H1 (cell line): ENCODE measurements at regions of chr16 and their contacts with region 1.

Region 1: DNA sequence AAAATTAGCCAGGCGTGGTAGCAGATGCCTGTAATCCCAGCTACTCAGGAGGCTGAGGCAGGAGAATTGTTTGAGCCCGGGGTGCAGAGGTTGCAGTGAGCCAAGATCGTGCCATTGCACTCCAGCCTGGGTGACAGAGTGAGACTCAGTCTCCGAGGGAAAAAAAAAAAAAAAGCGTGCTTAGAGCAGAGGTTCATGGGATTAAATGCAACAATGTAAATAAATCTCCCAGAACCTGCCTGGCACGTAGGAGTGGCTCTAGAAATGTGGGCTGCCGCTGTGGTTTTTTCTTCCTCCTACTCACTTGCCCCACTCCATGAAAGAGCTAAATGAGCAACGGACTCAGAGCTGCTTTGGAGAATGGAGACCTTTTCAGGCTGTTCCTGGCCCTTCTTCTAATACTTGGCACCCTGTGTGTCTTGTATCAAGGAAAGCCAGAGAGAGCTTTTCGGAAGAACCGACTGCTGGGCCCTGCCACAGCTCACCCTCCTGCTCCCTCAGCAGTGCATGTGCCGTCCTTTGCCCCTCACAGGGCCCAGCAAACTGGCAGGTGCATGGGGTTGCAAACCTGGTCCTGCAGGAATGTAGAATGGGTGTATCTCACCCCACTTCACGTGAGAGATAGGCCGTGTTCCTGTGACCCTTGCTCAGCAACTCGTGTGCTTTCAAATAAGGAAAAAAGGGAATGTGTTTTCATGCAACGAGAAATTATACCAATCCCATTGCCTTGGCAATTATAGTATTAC is 52.0 kb downstream of the LDHD start:
- DNase-seq: no peak
- H3K4me3 ChIP-seq: no peak overlapping the region
- H3K27ac ChIP-seq: no peak overlapping the region
- H3K4me1 ChIP-seq: peaks cover 4 to 16% (median 8%) of the 10 kb centered on the region in 4 experiments; a peak in 6 of 7 replicates
- H3K27me3 ChIP-seq: no peaks in the 10 kb centered on the region
- CTCF ChIP-seq: no peak
- EP300 ChIP-seq: no peak
- POLR2A ChIP-seq: no peak
- RAD21 ChIP-seq: no peak

Region 2: DNA sequence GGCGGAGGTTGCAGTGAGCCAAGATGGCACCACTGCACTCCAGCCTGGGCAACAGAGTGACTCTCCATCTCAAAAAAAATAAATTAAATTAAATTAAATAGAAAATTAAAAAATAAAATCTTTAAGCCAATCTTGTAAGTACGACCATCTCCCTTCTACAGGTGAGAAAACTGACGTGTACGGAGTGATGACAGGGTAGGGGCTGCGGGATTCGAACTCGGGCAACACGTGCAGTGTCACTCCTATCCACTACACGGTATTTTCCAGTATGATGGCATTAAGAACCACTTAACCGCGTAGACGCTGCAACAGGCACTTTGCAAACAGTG is 80.4 kb before region 1 on chr16:
- CTCF ChIA-PET with region 1: no interaction called
- POLR2A ChIA-PET with region 1: no interaction called
- DNase-seq: no peak
- H3K4me3 ChIP-seq: peak overlapping the region; percentile 76 to 91 (median 87)
- H3K27ac ChIP-seq: peak overlapping the region; percentile 86; the same call in 1 of the 2 replicates
- H3K4me1 ChIP-seq: no peaks in the 10 kb centered on the region
- H3K27me3 ChIP-seq: no peaks in the 10 kb centered on the region
- CTCF ChIP-seq: no peak
- EP300 ChIP-seq: no peak
- POLR2A ChIP-seq: no peak
- RAD21 ChIP-seq: no peak

Region 3: DNA sequence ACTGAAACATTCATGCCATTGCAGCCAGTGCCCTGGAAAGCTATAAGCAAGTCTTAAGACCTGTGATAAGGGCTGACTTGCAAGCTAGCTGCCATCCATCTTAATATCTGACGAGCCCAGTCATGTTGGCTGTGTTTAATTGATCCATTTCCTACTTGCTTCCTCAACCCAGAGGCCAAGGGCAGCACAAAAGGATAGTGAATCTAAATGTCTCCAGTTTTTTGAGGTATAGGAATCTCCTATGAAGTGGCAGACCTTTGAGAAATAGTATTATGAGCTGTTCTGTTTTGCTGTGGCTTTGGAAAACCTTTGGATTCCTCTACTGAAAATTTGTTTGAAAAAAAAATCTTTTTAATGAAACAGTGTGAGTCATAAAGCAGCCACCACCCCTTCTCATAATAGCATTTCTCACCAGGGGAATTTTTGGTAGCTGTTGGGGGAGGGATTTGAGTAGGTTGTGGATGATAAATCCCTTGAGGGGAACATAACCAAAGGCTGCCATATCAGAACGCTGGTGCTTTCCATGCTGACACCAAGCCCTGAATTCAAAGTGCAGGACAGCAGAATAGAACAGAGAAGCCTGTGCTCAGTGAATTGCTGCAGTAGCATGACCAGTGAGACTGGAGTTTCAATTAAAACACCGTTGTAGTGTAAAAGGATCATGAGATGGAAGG is 52.8 kb before region 1 on chr16:
- CTCF ChIA-PET with region 1: interaction called, 20 read pairs
- POLR2A ChIA-PET with region 1: interaction called, 3 read pairs
- DNase-seq: no peak
- H3K4me3 ChIP-seq: no peak overlapping the region
- H3K27ac ChIP-seq: no peak overlapping the region
- H3K4me1 ChIP-seq: peaks cover 0 to 14% (median 3%) of the 10 kb centered on the region in 4 experiments; a peak in 4 of 7 replicates
- H3K27me3 ChIP-seq: no peaks in the 10 kb centered on the region
- CTCF ChIP-seq: no peak
- EP300 ChIP-seq: no peak
- POLR2A ChIP-seq: no peak
- RAD21 ChIP-seq: no peak

Region 4: DNA sequence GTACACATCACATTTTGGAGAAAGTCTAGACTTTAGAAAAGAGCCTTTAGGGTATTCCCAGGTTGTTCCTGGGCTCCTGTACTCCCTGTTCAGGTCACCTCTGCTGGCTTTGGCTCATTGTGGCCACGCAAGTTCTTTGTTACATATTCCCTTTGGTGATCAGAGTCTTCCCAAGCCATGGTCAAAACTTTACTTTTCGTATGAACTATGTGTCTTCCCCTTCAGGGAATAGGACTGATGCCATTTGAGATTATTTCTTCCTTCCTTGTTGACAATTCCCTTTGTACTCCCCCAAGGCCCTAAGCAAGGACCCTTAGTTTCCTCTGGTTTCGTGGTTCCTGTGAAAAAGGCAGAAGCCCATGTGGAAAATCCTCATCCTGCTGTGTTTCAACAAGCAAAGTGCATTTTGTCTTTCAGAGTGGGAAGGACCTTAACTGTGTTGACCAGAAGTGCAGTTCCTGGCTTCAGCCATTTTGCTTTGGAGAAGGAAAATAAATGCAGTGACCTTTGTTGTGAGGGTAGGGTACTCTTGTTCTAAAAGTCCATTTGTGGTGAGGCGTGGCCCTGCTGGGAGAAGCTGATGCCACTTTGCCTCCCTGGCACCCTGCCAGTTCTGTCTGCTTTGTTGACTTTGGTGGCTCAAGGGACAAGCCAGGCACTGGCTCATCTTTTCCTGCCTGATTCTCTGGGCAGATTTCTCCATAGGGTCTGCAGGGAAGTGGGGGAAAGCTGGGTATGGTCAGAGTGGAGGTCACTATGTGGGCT is 10.6 kb before region 1 on chr16:
- CTCF ChIA-PET with region 1: interaction called, 12 read pairs
- POLR2A ChIA-PET with region 1: interaction called, 3 read pairs
- DNase-seq: no peak
- H3K4me3 ChIP-seq: no peak overlapping the region
- H3K27ac ChIP-seq: no peak overlapping the region
- H3K4me1 ChIP-seq: peaks cover 0 to 11% (median 3%) of the 10 kb centered on the region in 4 experiments; a peak in 4 of 7 replicates
- H3K27me3 ChIP-seq: no peaks in the 10 kb centered on the region
- CTCF ChIP-seq: no peak
- EP300 ChIP-seq: no peak
- POLR2A ChIP-seq: no peak
- RAD21 ChIP-seq: no peak

Region 5: GRCh38 chr16:75074920-75075687 is 10.5 kb after region 1 on chr16:
- CTCF ChIA-PET with region 1: interaction called, 20 read pairs
- POLR2A ChIA-PET with region 1: interaction called, 9 read pairs
- DNase-seq: no peak
- H3K4me3 ChIP-seq: no peak overlapping the region
- H3K27ac ChIP-seq: no peak overlapping the region
- H3K4me1 ChIP-seq: peaks cover 5 to 17% (median 14%) of the 10 kb centered on the region in 4 experiments
- H3K27me3 ChIP-seq: no peaks in the 10 kb centered on the region
- CTCF ChIP-seq: no peak
- EP300 ChIP-seq: no peak
- POLR2A ChIP-seq: no peak
- RAD21 ChIP-seq: no peak

Region 6: GRCh38 chr16:75087375-75087979 is 22.9 kb after region 1 on chr16:
- CTCF ChIA-PET with region 1: interaction called, 17 read pairs
- POLR2A ChIA-PET with region 1: interaction called, 3 read pairs
- DNase-seq: no peak
- H3K4me3 ChIP-seq: no peak overlapping the region
- H3K27ac ChIP-seq: no peak overlapping the region
- H3K4me1 ChIP-seq: peaks cover 0 to 17% (median 8%) of the 10 kb centered on the region in 4 experiments; a peak in 4 of 7 replicates
- H3K27me3 ChIP-seq: no peaks in the 10 kb centered on the region
- CTCF ChIP-seq: no peak
- EP300 ChIP-seq: no peak
- POLR2A ChIP-seq: no peak
- RAD21 ChIP-seq: peak in 1 of 2 experiments; percentile 21; a peak in 1 of 4 replicates